ENCODE measurements at regions of chr7 and their contacts with region 1.

Region 1: DNA sequence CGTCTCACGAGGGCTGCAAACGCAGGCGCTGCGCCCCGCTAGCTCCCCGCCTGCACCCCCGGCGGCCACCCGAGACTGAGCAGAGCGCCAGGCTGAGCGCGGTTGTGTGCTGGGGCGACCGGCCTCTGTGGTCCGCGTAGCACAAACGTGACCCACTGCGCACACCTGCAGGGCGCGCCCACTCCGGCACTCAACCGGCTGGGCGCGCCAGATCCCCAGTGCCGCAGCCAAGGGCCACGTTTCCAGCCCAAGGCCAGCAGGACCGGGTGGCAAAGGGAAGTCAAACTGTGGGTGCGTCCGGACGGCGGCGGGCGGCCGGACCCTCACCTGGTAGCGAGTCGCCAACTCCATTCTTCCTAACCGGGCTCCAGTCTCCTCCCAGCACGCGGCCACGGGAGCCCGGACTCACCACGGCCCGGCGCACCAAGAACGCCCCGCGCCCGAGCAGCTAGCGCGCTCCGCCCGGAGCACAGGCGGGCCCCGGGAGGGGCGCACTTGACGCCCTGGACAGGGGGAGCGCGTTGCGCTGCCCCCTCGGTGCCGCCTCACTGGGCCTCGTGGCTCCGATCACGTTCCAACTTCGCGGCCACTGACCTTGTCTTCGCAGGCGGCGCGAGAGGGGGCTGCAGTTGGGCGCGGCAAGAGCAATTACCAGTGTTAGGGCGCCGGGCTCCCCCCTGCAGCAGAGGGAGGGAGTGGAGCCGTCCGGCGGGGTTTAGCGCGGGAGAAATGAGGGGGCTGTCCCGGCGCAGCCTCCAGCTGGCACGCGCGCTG is at the start of gene CDCA7L:
- DNase-seq: peak; percentile 80
- ATAC-seq: peak; percentile 77
- H3K4me3 Mint-ChIP-seq: peak within 1 kb of the TSS; percentile 94
- H3K27ac Mint-ChIP-seq: peak within 1 kb of the TSS; percentile 96
- H3K4me1 Mint-ChIP-seq: peaks cover 70% of the 10 kb centered on the region
- H3K27me3 Mint-ChIP-seq: no peaks in the 10 kb centered on the region
- CTCF ChIP-seq: no peak
- total RNA-seq, gene CDCA7L: 69.8 and 70.3 TPM in 2 replicates

Region 2: DNA sequence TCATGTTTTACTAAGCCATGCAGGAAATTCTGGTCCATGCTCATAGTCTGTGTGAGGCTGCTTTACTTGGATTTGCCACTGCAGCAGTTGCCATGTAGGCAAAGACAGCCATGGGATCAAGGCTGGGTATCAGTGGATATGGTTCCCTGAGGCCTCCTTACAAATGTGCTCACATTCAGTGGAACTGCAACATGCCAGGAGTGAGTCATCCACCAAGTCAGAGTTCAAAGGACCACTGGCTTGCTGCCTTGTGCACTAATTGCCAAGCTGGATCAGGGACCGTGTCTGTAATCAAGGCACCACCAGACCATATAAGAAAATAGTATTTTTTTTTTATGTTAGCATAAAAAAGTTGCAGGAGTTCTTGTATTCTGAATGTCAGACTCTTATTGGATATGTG is 100.9 kb before region 1 on chr7:
- CTCF ChIA-PET with region 1: no interaction called
- POLR2A ChIA-PET with region 1: no interaction called
- intact Hi-C with region 1: no loop called
- DNase-seq: no peak
- ATAC-seq: no peak
- H3K4me3 Mint-ChIP-seq: no peak overlapping the region
- H3K27ac Mint-ChIP-seq: no peak overlapping the region
- H3K4me1 Mint-ChIP-seq: no peaks in the 10 kb centered on the region
- H3K27me3 Mint-ChIP-seq: no peaks in the 10 kb centered on the region
- CTCF ChIP-seq: no peak

Region 3: DNA sequence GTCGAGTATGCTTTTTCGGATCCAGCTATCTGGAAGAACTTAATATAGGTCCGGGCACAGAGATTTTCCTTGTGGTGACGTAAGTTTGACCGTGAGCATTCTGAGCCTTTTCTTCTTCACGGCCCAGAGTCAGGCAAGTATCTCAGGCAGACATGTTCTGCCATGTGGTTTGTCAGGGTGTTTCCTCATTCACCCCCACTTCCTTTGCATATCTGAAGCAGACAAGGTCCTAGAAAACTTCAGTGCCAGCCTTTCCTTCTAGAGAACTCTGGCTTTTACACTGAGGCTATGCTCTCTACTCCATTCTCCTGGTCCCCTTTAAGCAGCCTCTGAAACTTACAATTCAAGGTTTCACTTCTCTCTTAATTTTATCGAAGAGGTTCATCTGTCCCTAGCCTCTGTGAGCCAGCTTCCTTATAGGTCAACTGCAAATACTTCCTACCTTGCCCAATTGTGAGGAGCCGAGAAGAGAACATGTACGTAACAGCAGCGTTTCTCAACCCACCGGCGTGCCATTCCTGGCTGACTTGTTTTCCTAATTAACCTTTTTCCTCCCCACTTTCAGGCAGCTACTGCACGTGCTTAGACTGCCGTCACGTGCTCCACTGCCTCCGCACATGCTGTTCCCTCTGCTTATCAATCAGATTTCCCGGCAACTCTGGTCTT is 47.2 kb before region 1 on chr7:
- CTCF ChIA-PET with region 1: interaction called, 5 read pairs
- POLR2A ChIA-PET with region 1: interaction called, 26 read pairs
- intact Hi-C with region 1: loop called (anchors 1 kb)
- DNase-seq: no peak
- ATAC-seq: peak; percentile 92
- H3K4me3 Mint-ChIP-seq: peak overlapping the region; percentile 81
- H3K27ac Mint-ChIP-seq: peak overlapping the region; percentile 97
- H3K4me1 Mint-ChIP-seq: peaks cover 24% of the 10 kb centered on the region
- H3K27me3 Mint-ChIP-seq: no peaks in the 10 kb centered on the region
- CTCF ChIP-seq: no peak

Region 4: GRCh38 chr7:21966271-21966670 is 20.6 kb after region 1 on chr7:
- CTCF ChIA-PET with region 1: interaction called, 5 read pairs
- POLR2A ChIA-PET with region 1: interaction called, 70 read pairs
- intact Hi-C with region 1: loop called (anchors 1 kb)
- DNase-seq: peak; percentile 31
- ATAC-seq: peak; percentile 97
- H3K4me3 Mint-ChIP-seq: peak overlapping the region; percentile 66
- H3K27ac Mint-ChIP-seq: peak overlapping the region; percentile 87
- H3K4me1 Mint-ChIP-seq: peaks cover 63% of the 10 kb centered on the region
- H3K27me3 Mint-ChIP-seq: no peaks in the 10 kb centered on the region
- CTCF ChIP-seq: no peak

Region 5: GRCh38 chr7:22445140-22445743 is 499.6 kb after region 1 on chr7:
- CTCF ChIA-PET with region 1: no interaction called
- POLR2A ChIA-PET with region 1: interaction called, 3 read pairs
- intact Hi-C with region 1: loop called (anchors 10 kb)
- DNase-seq: no peak
- ATAC-seq: peak; percentile 26
- H3K4me3 Mint-ChIP-seq: peak overlapping the region; percentile 60
- H3K27ac Mint-ChIP-seq: peak overlapping the region; percentile 87
- H3K4me1 Mint-ChIP-seq: peaks cover 69% of the 10 kb centered on the region
- H3K27me3 Mint-ChIP-seq: no peaks in the 10 kb centered on the region
- CTCF ChIP-seq: no peak

Region 6: DNA sequence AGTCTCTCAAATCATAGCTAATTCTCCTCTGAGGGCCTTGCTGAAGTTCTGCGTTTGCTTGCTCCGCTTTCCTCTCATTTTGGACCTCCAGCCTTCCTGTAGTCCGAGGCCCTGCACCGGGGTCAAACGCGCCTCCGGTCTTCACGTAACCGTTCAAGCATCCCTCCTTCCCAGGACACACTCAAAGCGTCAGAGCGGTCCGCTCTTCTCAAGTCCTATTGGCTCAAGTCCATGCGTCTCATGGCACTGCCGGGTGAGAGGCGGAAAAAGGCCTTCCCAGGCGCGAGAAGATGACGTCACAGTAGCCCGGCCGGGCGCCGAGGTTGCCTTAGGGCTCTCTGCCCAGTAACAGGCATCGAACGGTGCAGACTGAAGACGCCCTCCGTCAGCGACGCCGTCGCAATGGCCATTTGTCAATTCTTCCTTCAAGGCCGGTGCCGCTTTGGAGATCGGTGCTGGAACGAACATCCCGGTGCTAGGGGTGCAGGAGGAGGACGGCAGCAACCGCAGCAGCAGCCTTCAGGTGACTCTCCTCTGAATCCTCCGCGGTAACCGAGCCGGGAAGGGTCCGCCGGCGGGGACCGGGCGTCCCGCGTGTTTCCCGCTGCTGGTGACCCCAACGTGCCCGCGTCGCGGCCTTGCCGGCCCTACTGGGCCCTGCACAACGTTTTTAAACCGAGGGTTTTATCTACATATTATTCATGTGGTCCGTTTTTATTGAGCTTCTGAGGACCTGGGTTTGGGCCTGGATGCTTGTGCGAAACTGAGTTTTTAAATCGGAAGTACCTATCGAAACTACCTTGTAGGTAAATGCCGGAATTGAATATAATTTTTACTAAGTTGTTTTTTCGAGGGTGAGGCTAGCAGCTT is 1236.3 kb after region 1 on chr7 and contains the start of gene NUP42:
- CTCF ChIA-PET with region 1: no interaction called
- POLR2A ChIA-PET with region 1: no interaction called
- intact Hi-C with region 1: loop called (anchors 5 kb)
- DNase-seq: peak; percentile 90
- ATAC-seq: peak; percentile 90
- H3K4me3 Mint-ChIP-seq: peak within 1 kb of the TSS; percentile 94
- H3K27ac Mint-ChIP-seq: peak within 1 kb of the TSS; percentile 100
- H3K4me1 Mint-ChIP-seq: peaks cover 28% of the 10 kb centered on the region
- H3K27me3 Mint-ChIP-seq: no peaks in the 10 kb centered on the region
- CTCF ChIP-seq: no peak
- total RNA-seq, gene NUP42: 39.2 and 50.6 TPM in 2 replicates

Measured in activated B cell treated with CpG ODN at 0.5 μM for 24 hours (primary cell).